ENCODE measurements at regions of chr16 and their contacts with region 1.

Region 1: GRCh38 chr16:75029557-75030253 is 30.9 kb downstream of the ZNRF1 start:
- DNase-seq: no peak
- ATAC-seq: no peak
- H3K4me3 Mint-ChIP-seq: no peak overlapping the region
- H3K27ac Mint-ChIP-seq: no peak overlapping the region
- H3K4me1 Mint-ChIP-seq: peaks cover 11% of the 10 kb centered on the region
- H3K27me3 Mint-ChIP-seq: no peaks in the 10 kb centered on the region

Region 2: GRCh38 chr16:74936902-74937560 is 92.7 kb before region 1 on chr16:
- CTCF ChIA-PET with region 1: no interaction called
- POLR2A ChIA-PET with region 1: no interaction called
- intact Hi-C with region 1: no loop called
- DNase-seq: peak; percentile 35
- ATAC-seq: peak; percentile 88
- H3K4me3 Mint-ChIP-seq: no peak overlapping the region
- H3K27ac Mint-ChIP-seq: no peak overlapping the region
- H3K4me1 Mint-ChIP-seq: peaks cover 4% of the 10 kb centered on the region
- H3K27me3 Mint-ChIP-seq: no peaks in the 10 kb centered on the region

Region 3: DNA sequence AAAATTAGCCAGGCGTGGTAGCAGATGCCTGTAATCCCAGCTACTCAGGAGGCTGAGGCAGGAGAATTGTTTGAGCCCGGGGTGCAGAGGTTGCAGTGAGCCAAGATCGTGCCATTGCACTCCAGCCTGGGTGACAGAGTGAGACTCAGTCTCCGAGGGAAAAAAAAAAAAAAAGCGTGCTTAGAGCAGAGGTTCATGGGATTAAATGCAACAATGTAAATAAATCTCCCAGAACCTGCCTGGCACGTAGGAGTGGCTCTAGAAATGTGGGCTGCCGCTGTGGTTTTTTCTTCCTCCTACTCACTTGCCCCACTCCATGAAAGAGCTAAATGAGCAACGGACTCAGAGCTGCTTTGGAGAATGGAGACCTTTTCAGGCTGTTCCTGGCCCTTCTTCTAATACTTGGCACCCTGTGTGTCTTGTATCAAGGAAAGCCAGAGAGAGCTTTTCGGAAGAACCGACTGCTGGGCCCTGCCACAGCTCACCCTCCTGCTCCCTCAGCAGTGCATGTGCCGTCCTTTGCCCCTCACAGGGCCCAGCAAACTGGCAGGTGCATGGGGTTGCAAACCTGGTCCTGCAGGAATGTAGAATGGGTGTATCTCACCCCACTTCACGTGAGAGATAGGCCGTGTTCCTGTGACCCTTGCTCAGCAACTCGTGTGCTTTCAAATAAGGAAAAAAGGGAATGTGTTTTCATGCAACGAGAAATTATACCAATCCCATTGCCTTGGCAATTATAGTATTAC is 34.9 kb after region 1 on chr16:
- CTCF ChIA-PET with region 1: no interaction called
- POLR2A ChIA-PET with region 1: no interaction called
- intact Hi-C with region 1: loop called in 1 of 2 experiments (anchors 5 kb)
- DNase-seq: peak; percentile 62
- ATAC-seq: peak; percentile 58
- H3K4me3 Mint-ChIP-seq: peak overlapping the region; percentile 56
- H3K27ac Mint-ChIP-seq: peak overlapping the region; percentile 74
- H3K4me1 Mint-ChIP-seq: peaks cover 41% of the 10 kb centered on the region
- H3K27me3 Mint-ChIP-seq: no peaks in the 10 kb centered on the region

Measured in activated CD4-positive, alpha-beta T cell treated with anti-CD3 and anti-CD28 coated beads for 36 hours (primary cell).